ENCODE measurements at regions of chr16 and their contacts with region 1.

Region 1: DNA sequence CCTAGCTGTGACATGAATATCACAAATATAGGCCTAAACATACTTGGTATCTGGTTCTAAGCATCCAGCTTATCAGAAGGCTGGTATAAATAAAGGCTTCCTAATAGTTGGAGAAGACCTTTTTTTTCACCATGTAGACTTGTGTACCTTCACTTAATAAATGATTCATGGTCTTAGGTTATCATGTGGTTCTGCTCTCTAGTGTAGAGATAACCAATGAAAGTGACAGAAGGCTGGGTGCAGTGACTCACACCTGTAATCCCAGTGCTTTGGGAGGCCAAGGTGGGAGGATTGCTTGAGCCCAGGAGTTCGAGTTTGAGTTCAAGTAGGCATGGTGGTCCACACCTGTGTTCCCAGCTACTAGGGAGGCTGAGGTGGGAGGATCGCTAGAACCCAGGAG is 3.1 kb downstream of the DDX19A start:
- DNase-seq: no peak
- ATAC-seq: no peak

Region 2: GRCh38 chr16:70298988-70299938 is 50.5 kb before region 1 on chr16 and contains the start of gene DDX19B:
- intact Hi-C with region 1: loop called in 1 of 2 experiments (anchors 2 kb)
- DNase-seq: peak; percentile 89
- ATAC-seq: peak; percentile 97 to 98
- total RNA-seq, gene DDX19B: 14.9 to 21.8 TPM

Region 3: DNA sequence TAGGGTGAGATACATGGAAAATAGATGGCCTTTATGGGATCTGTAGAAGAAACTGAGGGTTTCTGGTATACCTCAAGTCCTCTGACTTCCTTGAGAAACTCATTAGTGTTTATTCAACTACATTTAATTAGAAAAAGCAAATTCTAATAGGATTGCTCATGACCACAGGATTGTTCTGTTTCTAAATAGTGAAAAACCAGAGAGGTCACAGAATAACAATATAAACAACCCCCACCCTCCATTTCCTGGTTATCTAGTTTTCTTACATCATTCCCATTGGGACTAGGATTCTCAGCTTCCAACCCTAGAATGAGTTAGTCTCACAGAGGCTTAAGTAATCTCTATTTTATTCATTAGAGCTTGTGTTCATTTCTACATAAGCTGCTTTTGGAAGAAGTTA is 203.9 kb after region 1 on chr16:
- intact Hi-C with region 1: loop called in 1 of 2 experiments (anchors 10 kb)
- DNase-seq: no peak
- ATAC-seq: peak in 1 of 2 donors; percentile 25

Measured in left cardiac atrium (tissue), 4 donors.